ENCODE measurements at regions of chr16 and their contacts with region 1.

Region 1: GRCh38 chr16:19583665-19584300 is 28.3 kb downstream of the VPS35L start:
- DNase-seq: peak; percentile 33
- ATAC-seq: peak; percentile 79
- H3K4me3 Mint-ChIP-seq: no peak overlapping the region
- H3K27ac Mint-ChIP-seq: no peak overlapping the region
- H3K4me1 Mint-ChIP-seq: no peaks in the 10 kb centered on the region
- H3K27me3 Mint-ChIP-seq: no peaks in the 10 kb centered on the region
- CTCF ChIP-seq: peak; percentile 80

Region 2: GRCh38 chr16:19513377-19514053 is 70.3 kb before region 1 on chr16:
- CTCF ChIA-PET with region 1: no interaction called
- POLR2A ChIA-PET with region 1: no interaction called
- DNase-seq: no peak
- ATAC-seq: no peak
- H3K4me3 Mint-ChIP-seq: no peak overlapping the region
- H3K27ac Mint-ChIP-seq: no peak overlapping the region
- H3K4me1 Mint-ChIP-seq: peaks cover 2% of the 10 kb centered on the region; the same call in 1 of the 2 replicates
- H3K27me3 Mint-ChIP-seq: no peaks in the 10 kb centered on the region
- CTCF ChIP-seq: no peak

Region 3: GRCh38 chr16:19555162-19555937 is 28.4 kb before region 1 on chr16 and contains the start of gene VPS35L:
- CTCF ChIA-PET with region 1: interaction called, 50 read pairs
- POLR2A ChIA-PET with region 1: no interaction called
- DNase-seq: peak; percentile 98
- ATAC-seq: peak; percentile 89
- H3K4me3 Mint-ChIP-seq: peak within 1 kb of the TSS; percentile 94
- H3K27ac Mint-ChIP-seq: peak within 1 kb of the TSS; percentile 98
- H3K4me1 Mint-ChIP-seq: peaks cover 20% of the 10 kb centered on the region
- H3K27me3 Mint-ChIP-seq: no peaks in the 10 kb centered on the region
- CTCF ChIP-seq: peak; percentile 27; the same call in 1 of the 2 replicates
- total RNA-seq, gene VPS35L: 59.7 to 71.7 TPM (median 65.5 TPM) in 3 replicates

Region 4: GRCh38 chr16:19563377-19563776 is 20.4 kb before region 1 on chr16:
- CTCF ChIA-PET with region 1: interaction called, 20 read pairs
- POLR2A ChIA-PET with region 1: interaction called, 3 read pairs
- DNase-seq: no peak
- ATAC-seq: no peak
- H3K4me3 Mint-ChIP-seq: no peak overlapping the region
- H3K27ac Mint-ChIP-seq: no peak overlapping the region
- H3K4me1 Mint-ChIP-seq: peaks cover 6% of the 10 kb centered on the region
- H3K27me3 Mint-ChIP-seq: no peaks in the 10 kb centered on the region
- CTCF ChIP-seq: no peak

Region 5: GRCh38 chr16:19601083-19601976 is 17.5 kb after region 1 on chr16:
- CTCF ChIA-PET with region 1: interaction called, 119 read pairs
- POLR2A ChIA-PET with region 1: no interaction called
- DNase-seq: no peak
- ATAC-seq: peak; percentile 53
- H3K4me3 Mint-ChIP-seq: no peak overlapping the region
- H3K27ac Mint-ChIP-seq: peak overlapping the region; percentile 84
- H3K4me1 Mint-ChIP-seq: peaks cover 19% of the 10 kb centered on the region
- H3K27me3 Mint-ChIP-seq: no peaks in the 10 kb centered on the region
- CTCF ChIP-seq: peak; percentile 44; the same call in 1 of the 2 replicates

Region 6: DNA sequence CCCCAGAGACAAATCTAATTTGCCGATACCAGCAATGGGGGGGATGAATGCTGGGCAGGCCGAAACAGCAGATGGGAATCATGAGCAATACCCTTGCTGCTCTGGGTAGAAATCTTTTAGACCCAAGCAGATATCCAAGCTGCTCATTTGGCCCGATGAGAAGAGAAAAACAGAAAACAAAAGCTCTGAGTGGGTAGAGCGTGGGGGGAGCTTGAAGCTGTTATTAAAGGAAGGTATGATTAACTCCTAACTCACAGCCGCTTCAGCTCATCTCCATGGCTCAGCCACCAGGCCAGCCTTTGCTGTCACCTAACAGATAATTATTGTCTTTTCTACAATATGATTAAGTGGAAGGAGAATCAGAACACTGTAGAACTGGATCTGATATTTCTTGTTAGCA is 30.1 kb after region 1 on chr16:
- CTCF ChIA-PET with region 1: interaction called, 10 read pairs
- POLR2A ChIA-PET with region 1: no interaction called
- DNase-seq: no peak
- ATAC-seq: no peak
- H3K4me3 Mint-ChIP-seq: no peak overlapping the region
- H3K27ac Mint-ChIP-seq: no peak overlapping the region
- H3K4me1 Mint-ChIP-seq: no peaks in the 10 kb centered on the region
- H3K27me3 Mint-ChIP-seq: no peaks in the 10 kb centered on the region
- CTCF ChIP-seq: no peak

Region 7: GRCh38 chr16:19639986-19640421 is 56.2 kb after region 1 on chr16:
- CTCF ChIA-PET with region 1: interaction called, 15 read pairs
- POLR2A ChIA-PET with region 1: no interaction called
- DNase-seq: no peak
- ATAC-seq: no peak
- H3K4me3 Mint-ChIP-seq: no peak overlapping the region
- H3K27ac Mint-ChIP-seq: peak overlapping the region; percentile 18; the same call in 1 of the 2 replicates
- H3K4me1 Mint-ChIP-seq: no peaks in the 10 kb centered on the region
- H3K27me3 Mint-ChIP-seq: no peaks in the 10 kb centered on the region
- CTCF ChIP-seq: no peak

Region 8: DNA sequence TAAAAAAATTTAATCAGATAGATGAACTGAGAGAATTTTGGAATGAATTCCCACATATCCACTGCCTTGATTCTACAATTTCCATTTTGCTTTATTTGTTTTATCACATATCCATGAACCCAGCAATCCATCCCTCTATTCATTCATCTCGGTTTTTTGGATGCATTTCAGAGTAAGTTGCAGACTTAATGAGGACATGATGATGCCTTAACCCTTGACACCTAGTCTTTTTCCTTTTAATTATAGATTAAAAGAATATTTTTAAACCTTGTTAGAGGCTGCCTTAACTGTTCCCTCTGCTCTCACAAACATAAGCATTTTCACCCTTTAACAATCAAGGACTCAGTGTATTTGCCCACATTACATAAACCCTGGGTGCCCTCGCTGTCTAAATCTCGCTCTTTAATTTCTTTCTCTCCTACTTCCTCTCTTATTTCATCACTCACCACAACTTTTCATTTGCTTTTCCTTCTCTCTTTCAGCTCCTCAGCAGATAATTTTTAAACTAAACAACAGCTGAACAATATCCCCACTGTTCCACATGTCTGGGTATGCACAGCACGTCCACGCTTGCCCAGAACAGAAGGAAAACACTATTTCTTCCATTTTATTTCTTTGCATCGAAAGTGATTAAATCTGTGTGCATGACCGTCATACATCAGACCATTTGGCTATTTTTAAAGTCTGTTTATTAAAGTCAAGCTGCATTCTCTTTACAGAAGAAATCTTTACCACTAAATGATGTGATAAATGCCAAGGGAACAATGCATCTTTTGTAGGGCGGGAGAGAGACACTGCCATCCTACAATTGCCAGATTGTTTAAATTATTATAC is 174.2 kb after region 1 on chr16:
- CTCF ChIA-PET with region 1: no interaction called
- POLR2A ChIA-PET with region 1: no interaction called
- DNase-seq: no peak
- ATAC-seq: no peak
- H3K4me3 Mint-ChIP-seq: no peak overlapping the region
- H3K27ac Mint-ChIP-seq: 0 out of 2 replicates have a peak overlapping the region, but pooled peaks have one; percentile 24
- H3K4me1 Mint-ChIP-seq: peaks cover 9% of the 10 kb centered on the region
- H3K27me3 Mint-ChIP-seq: no peaks in the 10 kb centered on the region
- CTCF ChIP-seq: no peak

Region 9: GRCh38 chr16:19886073-19886941 is 302.5 kb after region 1 on chr16:
- CTCF ChIA-PET with region 1: interaction called, 11 read pairs
- POLR2A ChIA-PET with region 1: interaction called, 3 read pairs
- DNase-seq: peak; percentile 87
- ATAC-seq: peak; percentile 8
- H3K4me3 Mint-ChIP-seq: peak overlapping the region; percentile 74
- H3K27ac Mint-ChIP-seq: no peak overlapping the region; the same call in 1 of the 2 replicates
- H3K4me1 Mint-ChIP-seq: peaks cover 31% of the 10 kb centered on the region
- H3K27me3 Mint-ChIP-seq: peaks cover 19% of the 10 kb centered on the region
- CTCF ChIP-seq: peak; percentile 97